Tibial artery (tissue), 4 donors: ENCODE measurements at regions of chr20 and their contacts with region 1.

Region 1: GRCh38 chr20:58692594-58693226 is at the start of gene NPEPL1:
- DNase-seq: peak in 1 of 2 donors; percentile 77
- H3K4me3 ChIP-seq: peak within 1 kb of the TSS; percentile 55 to 70
- H3K27ac ChIP-seq: peak within 1 kb of the TSS; percentile 90 to 94
- H3K4me1 ChIP-seq: peaks cover 0 to 42% (median 23%) of the 10 kb centered on the region in 4 donors
- H3K27me3 ChIP-seq: no peaks in the 10 kb centered on the region
- CTCF ChIP-seq: peak in 1 of 2 experiments; percentile 58

Region 2: GRCh38 chr20:57999465-58000111 is 693.1 kb before region 1 on chr20:
- intact Hi-C with region 1: no loop called
- DNase-seq: peak; percentile 40 to 71
- H3K4me3 ChIP-seq: peak overlapping the region; percentile 8 to 26
- H3K27ac ChIP-seq: peak overlapping the region in 1 of 2 donors; percentile 40
- H3K4me1 ChIP-seq: peaks cover 0 to 36% (median 25%) of the 10 kb centered on the region in 4 donors
- H3K27me3 ChIP-seq: no peaks in the 10 kb centered on the region
- CTCF ChIP-seq: no peak

Region 3: GRCh38 chr20:58309575-58310290 is 383.0 kb before region 1 on chr20 and contains the start of gene RAB22A:
- intact Hi-C with region 1: loop called (anchors 10 kb)
- DNase-seq: peak; percentile 74 to 87
- H3K4me3 ChIP-seq: peak within 1 kb of the TSS; percentile 100
- H3K27ac ChIP-seq: peak within 1 kb of the TSS; percentile 90 to 93
- H3K4me1 ChIP-seq: peaks cover 0 to 43% (median 25%) of the 10 kb centered on the region in 4 donors
- H3K27me3 ChIP-seq: no peaks in the 10 kb centered on the region
- CTCF ChIP-seq: no peak

Region 4: GRCh38 chr20:58790454-58790853 is 97.7 kb after region 1 on chr20:
- intact Hi-C with region 1: no loop called
- DNase-seq: no peak
- H3K4me3 ChIP-seq: no peak overlapping the region
- H3K27ac ChIP-seq: no peak overlapping the region
- H3K4me1 ChIP-seq: no peaks in the 10 kb centered on the region
- H3K27me3 ChIP-seq: peaks cover 0 to 81% of the 10 kb centered on the region in 2 donors
- CTCF ChIP-seq: no peak